ENCODE measurements at regions of chr2 and their contacts with region 1.

Region 1: DNA sequence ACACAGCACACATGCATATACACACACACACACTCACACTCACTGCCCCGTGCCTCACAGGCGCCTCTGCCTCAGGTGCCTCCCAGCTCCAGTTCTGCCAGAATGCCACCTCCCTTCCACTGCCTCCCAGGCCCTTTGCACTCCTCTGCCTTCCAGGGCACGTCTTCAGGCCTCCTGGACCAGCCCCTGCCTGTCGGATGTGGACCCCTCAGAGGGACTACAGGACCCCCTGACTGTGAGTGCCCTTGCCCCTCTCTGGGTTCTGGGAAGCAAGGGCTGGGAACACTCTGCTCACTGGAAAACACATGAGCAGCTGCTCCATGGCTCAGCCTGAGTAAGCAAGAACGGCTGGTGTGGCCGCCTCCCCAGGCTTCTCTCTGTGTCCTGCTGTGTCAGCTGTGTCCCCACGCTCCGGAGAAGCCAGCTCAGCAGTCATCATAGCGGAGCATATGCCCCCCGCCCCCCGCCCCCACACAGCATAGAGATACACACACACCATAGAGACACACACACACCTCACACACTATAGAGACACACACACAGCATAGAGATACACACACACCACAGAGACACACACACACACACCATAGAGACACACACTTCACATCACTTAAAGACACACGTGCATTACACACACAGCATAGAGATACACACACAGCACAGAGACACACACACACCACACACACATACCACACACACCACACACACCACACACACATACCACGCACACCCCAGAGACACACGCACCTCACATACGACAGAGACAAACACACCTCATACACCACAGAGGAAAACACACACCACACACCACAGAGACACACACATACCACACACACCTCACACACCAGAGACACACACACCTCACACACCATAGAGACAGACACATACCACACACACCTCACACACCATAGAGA is 271.3 kb downstream of the CYRIA start:
- DNase-seq: peak; percentile 65 to 74
- H3K4me3 ChIP-seq: no peak overlapping the region
- H3K4me3 Mint-ChIP-seq: no peak overlapping the region
- H3K27ac Mint-ChIP-seq: no peak overlapping the region
- H3K4me1 ChIP-seq: peaks cover 60% of the 10 kb centered on the region
- H3K4me1 Mint-ChIP-seq: peaks cover 13% of the 10 kb centered on the region
- H3K27me3 ChIP-seq: no peaks in the 10 kb centered on the region
- H3K27me3 Mint-ChIP-seq: no peaks in the 10 kb centered on the region
- CTCF ChIP-seq: no peak

Region 2: DNA sequence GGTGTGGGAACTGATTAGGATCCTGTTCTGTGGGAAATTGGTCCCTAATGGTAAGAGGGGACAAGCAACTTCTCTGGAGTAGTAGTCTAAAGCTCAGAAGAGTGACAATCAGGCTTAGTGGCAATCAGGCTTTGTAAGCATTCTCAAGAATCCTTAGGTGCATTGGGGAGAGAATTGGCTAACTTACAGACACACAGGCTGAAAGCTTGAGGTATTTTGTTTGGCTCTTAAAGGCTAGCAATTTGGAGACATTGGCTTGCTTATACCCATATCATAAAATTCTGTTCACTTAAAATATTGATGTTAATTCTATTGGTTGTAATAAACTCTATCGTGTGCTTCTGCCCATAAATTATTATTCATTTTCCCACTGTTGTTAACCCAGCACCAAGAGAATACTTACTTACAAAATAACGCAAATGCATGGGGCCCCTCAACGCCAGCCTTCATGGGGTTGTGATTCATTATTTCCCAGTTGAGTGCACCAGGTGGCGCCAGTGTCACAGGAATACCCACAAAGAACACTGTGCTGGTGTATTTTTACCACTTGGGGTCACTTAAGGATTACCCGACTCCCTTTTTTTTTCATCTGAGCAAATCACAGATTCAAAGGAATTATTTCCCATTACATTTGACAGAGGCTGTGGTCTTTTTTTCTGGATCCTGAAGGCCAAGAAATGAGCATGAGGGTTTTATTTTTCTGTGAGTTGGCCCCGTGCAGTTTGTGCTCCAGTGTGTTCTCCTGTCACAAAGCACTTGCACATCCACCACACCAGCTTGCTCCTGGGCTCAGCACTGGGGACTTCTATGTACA is 757.1 kb before region 1 on chr2:
- CTCF ChIA-PET with region 1: no interaction called
- POLR2A ChIA-PET with region 1: no interaction called
- intact Hi-C with region 1: loop called (anchors 2 kb)
- DNase-seq: peak; percentile 72 to 80
- H3K4me3 ChIP-seq: no peak overlapping the region
- H3K4me3 Mint-ChIP-seq: no peak overlapping the region
- H3K27ac Mint-ChIP-seq: no peak overlapping the region
- H3K4me1 ChIP-seq: peaks cover 55% of the 10 kb centered on the region
- H3K4me1 Mint-ChIP-seq: peaks cover 32% of the 10 kb centered on the region
- H3K27me3 ChIP-seq: no peaks in the 10 kb centered on the region
- H3K27me3 Mint-ChIP-seq: no peaks in the 10 kb centered on the region
- CTCF ChIP-seq: peak; percentile 85 to 98

Region 3: DNA sequence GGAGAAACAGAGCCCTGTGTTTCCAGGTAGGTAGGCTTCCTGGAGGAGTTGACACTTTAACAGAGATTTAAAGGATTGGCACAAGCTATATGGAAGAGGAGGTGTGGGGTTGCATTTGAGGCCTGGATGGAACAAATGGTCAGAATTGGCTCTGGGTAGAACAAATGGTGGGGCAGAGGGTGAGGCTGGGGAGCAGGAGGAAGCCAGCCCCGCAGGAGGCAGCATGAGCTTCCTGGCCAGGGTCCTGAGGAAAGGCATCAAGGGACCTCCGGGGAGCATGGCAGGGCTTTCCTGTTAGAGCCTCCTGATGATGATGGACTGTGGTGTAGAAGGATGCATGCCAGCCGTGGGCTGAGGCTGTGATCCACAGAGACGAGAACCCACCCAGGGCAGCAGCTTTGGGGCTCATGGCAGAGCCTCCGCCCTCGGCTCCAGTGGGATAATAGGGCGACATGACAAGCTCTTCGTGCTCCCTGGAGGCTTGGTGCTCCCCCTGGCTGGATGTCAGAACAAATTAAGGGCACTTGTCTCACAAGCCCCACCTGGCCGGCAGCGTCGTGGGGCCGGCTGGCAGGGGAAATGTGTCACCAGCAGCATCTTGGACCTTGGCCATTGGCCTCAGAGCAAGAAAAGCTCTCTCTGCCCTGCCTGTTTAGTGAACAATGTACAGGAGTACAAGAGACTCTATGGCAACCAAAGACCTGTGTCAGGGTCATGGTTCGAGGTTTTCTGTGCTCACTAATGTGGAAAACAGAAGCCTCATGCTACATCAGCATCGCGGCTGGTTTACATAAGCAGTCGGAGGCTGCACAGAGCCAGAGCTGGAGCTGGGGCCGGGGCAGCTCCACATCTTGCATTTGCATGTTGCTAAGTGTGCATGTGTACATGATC is 300.4 kb before region 1 on chr2:
- CTCF ChIA-PET with region 1: no interaction called
- POLR2A ChIA-PET with region 1: no interaction called
- intact Hi-C with region 1: loop called (anchors 5 kb)
- DNase-seq: peak; percentile 25 to 73
- H3K4me3 ChIP-seq: no peak overlapping the region
- H3K4me3 Mint-ChIP-seq: no peak overlapping the region
- H3K27ac Mint-ChIP-seq: peak overlapping the region; percentile 37
- H3K4me1 ChIP-seq: peaks cover 39% of the 10 kb centered on the region
- H3K4me1 Mint-ChIP-seq: peaks cover 16% of the 10 kb centered on the region
- H3K27me3 ChIP-seq: no peaks in the 10 kb centered on the region
- H3K27me3 Mint-ChIP-seq: no peaks in the 10 kb centered on the region
- CTCF ChIP-seq: no peak

Region 4: GRCh38 chr2:16240402-16240801 is 153.9 kb before region 1 on chr2:
- CTCF ChIA-PET with region 1: no interaction called
- POLR2A ChIA-PET with region 1: no interaction called
- intact Hi-C with region 1: loop called (anchors 5 kb)
- DNase-seq: no peak
- H3K4me3 ChIP-seq: no peak overlapping the region
- H3K4me3 Mint-ChIP-seq: no peak overlapping the region
- H3K27ac Mint-ChIP-seq: no peak overlapping the region
- H3K4me1 ChIP-seq: peaks cover 62% of the 10 kb centered on the region
- H3K4me1 Mint-ChIP-seq: peaks cover 36% of the 10 kb centered on the region
- H3K27me3 ChIP-seq: no peaks in the 10 kb centered on the region
- H3K27me3 Mint-ChIP-seq: no peaks in the 10 kb centered on the region
- CTCF ChIP-seq: no peak

Region 5: GRCh38 chr2:16303273-16303577 is 91.1 kb before region 1 on chr2:
- CTCF ChIA-PET with region 1: no interaction called
- POLR2A ChIA-PET with region 1: no interaction called
- intact Hi-C with region 1: no loop called
- DNase-seq: no peak
- H3K4me3 ChIP-seq: no peak overlapping the region
- H3K4me3 Mint-ChIP-seq: no peak overlapping the region
- H3K27ac Mint-ChIP-seq: no peak overlapping the region
- H3K4me1 ChIP-seq: no peaks in the 10 kb centered on the region
- H3K4me1 Mint-ChIP-seq: peaks cover 10% of the 10 kb centered on the region
- H3K27me3 ChIP-seq: no peaks in the 10 kb centered on the region
- H3K27me3 Mint-ChIP-seq: no peaks in the 10 kb centered on the region
- CTCF ChIP-seq: no peak

Region 6: GRCh38 chr2:16407358-16407757 is 13.0 kb after region 1 on chr2:
- CTCF ChIA-PET with region 1: interaction called, 4 read pairs
- POLR2A ChIA-PET with region 1: no interaction called
- intact Hi-C with region 1: loop called (anchors 1 kb)
- DNase-seq: no peak
- H3K4me3 ChIP-seq: no peak overlapping the region
- H3K4me3 Mint-ChIP-seq: no peak overlapping the region
- H3K27ac Mint-ChIP-seq: no peak overlapping the region
- H3K4me1 ChIP-seq: peaks cover 46% of the 10 kb centered on the region
- H3K4me1 Mint-ChIP-seq: peaks cover 43% of the 10 kb centered on the region
- H3K27me3 ChIP-seq: no peaks in the 10 kb centered on the region
- H3K27me3 Mint-ChIP-seq: no peaks in the 10 kb centered on the region
- CTCF ChIP-seq: no peak

Region 7: DNA sequence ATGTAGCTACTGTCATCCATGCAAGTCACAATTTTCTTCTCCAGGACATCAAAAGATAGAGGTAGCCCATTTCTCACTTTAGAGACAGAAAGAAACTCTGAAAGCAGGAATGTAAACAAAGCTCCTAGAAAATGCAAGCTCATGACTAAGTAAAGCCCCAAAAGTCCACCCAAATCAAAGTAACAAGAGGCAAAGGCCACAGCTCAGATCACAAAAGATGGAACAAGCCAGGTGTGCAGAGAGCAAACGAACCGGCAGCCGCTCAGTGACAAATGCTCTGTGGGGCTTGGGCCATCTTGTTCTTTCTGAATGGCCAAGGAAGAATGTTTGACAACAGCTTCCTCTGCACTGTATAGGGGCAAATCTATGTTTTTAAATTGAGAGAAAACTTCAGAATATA is 70.3 kb after region 1 on chr2:
- CTCF ChIA-PET with region 1: no interaction called
- POLR2A ChIA-PET with region 1: no interaction called
- intact Hi-C with region 1: loop called (anchors 2 kb)
- DNase-seq: peak; percentile 56 to 65
- H3K4me3 ChIP-seq: no peak overlapping the region
- H3K4me3 Mint-ChIP-seq: peak overlapping the region; percentile 26
- H3K27ac Mint-ChIP-seq: peak overlapping the region; percentile 58
- H3K4me1 ChIP-seq: peaks cover 24% of the 10 kb centered on the region
- H3K4me1 Mint-ChIP-seq: peaks cover 23% of the 10 kb centered on the region
- H3K27me3 ChIP-seq: no peaks in the 10 kb centered on the region
- H3K27me3 Mint-ChIP-seq: no peaks in the 10 kb centered on the region
- CTCF ChIP-seq: no peak

Region 8: GRCh38 chr2:16608661-16609643 is 214.6 kb after region 1 on chr2:
- CTCF ChIA-PET with region 1: no interaction called
- POLR2A ChIA-PET with region 1: no interaction called
- intact Hi-C with region 1: loop called (anchors 5 kb)
- DNase-seq: peak; percentile 86 to 92
- H3K4me3 ChIP-seq: peak overlapping the region; percentile 53
- H3K4me3 Mint-ChIP-seq: peak overlapping the region; percentile 77
- H3K27ac Mint-ChIP-seq: peak overlapping the region; percentile 34
- H3K4me1 ChIP-seq: no peaks in the 10 kb centered on the region
- H3K4me1 Mint-ChIP-seq: peaks cover 7% of the 10 kb centered on the region
- H3K27me3 ChIP-seq: no peaks in the 10 kb centered on the region
- H3K27me3 Mint-ChIP-seq: peaks cover 7% of the 10 kb centered on the region
- CTCF ChIP-seq: peak; percentile 93 to 95